Dendritic cell treated with granulocyte-macrophage colony-stimulating factor and Interleukin-4, amounts not matched to agents 40 ng/mL and 50 ng/mL, for 4 days (primary cell): ENCODE measurements at regions of chr6 and their contacts with region 1.

Region 1: DNA sequence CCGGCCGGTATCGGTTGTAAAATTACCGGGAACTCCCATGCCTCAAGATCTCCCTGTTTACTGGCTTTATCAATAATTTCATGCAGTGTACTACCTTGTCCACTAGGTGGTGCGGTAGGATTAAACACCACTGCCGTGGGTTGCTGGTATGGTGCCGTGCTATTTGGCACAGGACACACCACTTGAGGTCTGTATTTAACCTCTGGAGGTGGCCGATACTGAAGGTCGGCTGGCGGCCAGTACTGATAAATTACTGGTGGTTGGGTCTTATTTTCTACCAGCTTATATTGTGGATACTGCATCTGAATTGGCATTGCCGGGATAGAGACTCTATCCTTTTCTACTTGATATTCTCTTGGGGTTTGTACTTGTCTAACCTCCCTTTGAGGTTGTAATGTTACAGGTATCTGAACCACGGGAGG is 14.3 kb upstream of the PTCRA start:
- H3K4me3 Mint-ChIP-seq: no peak overlapping the region
- H3K27ac Mint-ChIP-seq: no peak overlapping the region
- H3K4me1 Mint-ChIP-seq: peaks cover 21% of the 10 kb centered on the region
- H3K27me3 Mint-ChIP-seq: no peaks in the 10 kb centered on the region

Region 2: GRCh38 chr6:42745707-42746462 is 155.7 kb before region 1 on chr6 and contains the start of gene TBCC:
- intact Hi-C with region 1: no loop called
- H3K4me3 Mint-ChIP-seq: peak within 1 kb of the TSS; percentile 98
- H3K27ac Mint-ChIP-seq: peak within 1 kb of the TSS; percentile 92
- H3K4me1 Mint-ChIP-seq: peaks cover 23% of the 10 kb centered on the region
- H3K27me3 Mint-ChIP-seq: no peaks in the 10 kb centered on the region

Region 3: GRCh38 chr6:43021270-43022047 is 119.9 kb after region 1 on chr6 and contains the start of gene RRP36:
- intact Hi-C with region 1: loop called (anchors 5 kb)
- H3K4me3 Mint-ChIP-seq: peak within 1 kb of the TSS; percentile 97
- H3K27ac Mint-ChIP-seq: peak within 1 kb of the TSS; percentile 87
- H3K4me1 Mint-ChIP-seq: peaks cover 48% of the 10 kb centered on the region
- H3K27me3 Mint-ChIP-seq: no peaks in the 10 kb centered on the region

Region 4: DNA sequence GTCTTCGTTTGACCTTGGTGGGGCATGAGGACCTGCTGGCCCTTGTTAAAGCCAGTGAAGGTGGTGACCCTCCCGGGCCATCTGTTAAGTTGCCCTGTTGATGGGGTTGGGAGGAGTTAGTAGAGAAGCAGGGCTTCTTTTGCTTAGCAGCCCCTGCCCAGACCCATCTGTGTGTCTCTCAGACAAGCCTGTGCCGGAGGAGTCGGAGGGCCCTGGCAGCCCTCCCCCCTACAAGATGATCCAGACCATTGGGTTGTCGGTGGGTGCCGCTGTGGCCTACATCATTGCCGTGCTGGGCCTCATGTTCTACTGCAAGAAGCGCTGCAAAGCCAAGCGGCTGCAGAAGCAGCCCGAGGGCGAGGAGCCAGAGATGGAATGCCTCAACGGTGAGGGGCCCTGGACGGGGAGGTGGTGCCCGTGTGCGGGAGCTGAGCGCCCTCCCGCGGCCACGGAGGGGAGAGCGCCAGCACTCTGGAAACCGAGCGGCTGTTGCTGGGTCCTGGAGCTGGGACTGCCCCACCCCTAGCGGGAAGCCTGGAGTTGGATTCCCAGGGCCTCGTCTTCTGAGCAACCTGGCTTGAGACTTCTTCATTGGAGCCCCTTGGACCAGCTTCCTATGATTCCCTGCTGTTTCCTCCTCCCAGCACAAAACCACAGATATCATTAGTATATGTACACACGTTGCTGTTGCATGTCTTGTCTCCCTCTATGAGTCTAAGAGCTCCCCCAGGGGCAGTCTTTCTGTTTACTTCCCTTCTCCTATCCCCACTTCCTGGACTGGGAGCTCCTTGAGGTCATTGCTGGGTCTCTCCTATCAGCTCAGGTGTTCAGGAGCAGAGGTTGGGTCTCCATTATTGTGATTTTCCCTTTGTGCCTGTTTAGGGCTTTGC is 241.9 kb after region 1 on chr6:
- intact Hi-C with region 1: loop called (anchors 2 kb)
- H3K4me3 Mint-ChIP-seq: no peak overlapping the region
- H3K27ac Mint-ChIP-seq: no peak overlapping the region
- H3K4me1 Mint-ChIP-seq: peaks cover 8% of the 10 kb centered on the region
- H3K27me3 Mint-ChIP-seq: no peaks in the 10 kb centered on the region